Activated naive CD4-positive, alpha-beta T cell treated with anti-CD3 and anti-CD28 coated beads for 36 hours (primary cell): ENCODE measurements at regions of chr15 and their contacts with region 1.

Region 1: DNA sequence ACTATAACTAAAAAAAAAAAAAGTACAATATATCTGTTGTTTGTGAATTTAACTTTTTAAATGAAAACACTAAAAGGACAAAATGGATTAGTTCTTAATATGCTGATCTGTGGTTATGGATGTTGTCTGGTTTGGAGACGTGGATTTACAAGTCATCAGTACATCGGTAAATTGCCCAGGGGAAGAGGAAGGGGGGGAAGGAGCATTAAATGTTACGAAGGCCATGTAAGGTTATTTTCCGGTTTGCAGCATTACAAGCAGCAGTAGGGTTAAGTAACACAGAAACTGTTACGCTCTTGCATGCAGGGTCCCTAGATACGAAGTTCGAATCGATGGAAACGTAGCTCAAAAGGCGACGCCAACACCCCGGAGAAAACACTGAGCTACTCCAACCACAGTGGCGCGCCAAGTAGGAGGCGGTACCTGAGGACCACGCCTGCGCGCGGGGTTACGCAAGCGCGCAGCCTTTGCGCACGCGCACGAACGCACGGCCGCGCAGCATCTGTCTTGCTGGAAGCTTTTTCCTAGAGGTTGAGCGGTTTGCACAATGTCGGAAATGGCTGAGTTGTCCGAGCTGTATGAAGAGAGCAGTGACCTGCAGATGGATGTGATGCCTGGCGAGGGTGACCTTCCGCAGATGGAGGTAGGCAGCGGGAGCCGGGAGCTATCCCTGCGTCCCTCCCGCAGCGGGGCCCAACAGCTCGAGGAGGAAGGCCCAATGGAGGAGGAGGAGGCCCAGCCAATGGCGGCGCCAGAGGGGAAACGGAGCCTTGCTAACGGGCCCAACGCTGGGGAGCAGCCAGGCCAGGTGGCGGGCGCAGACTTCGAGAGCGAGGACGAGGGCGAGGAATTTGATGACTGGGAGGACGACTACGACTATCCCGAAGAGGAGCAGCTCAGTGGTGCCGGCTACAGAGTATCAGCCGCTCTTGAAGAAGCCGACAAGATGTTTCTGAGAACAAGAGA is at the start of gene EID1:
- DNase-seq: peak; percentile 93
- H3K4me3 Mint-ChIP-seq: peak within 1 kb of the TSS; percentile 92
- H3K27ac Mint-ChIP-seq: peak within 1 kb of the TSS; percentile 94
- H3K4me1 Mint-ChIP-seq: peaks cover 29% of the 10 kb centered on the region
- H3K27me3 Mint-ChIP-seq: peaks cover 6% of the 10 kb centered on the region
- total RNA-seq, gene EID1: 43.2 to 48.4 TPM

Region 2: GRCh38 chr15:48810414-48811317 is 67.2 kb before region 1 on chr15 and contains the start of gene CEP152:
- CTCF ChIA-PET with region 1: no interaction called
- intact Hi-C with region 1: loop called (anchors 1 kb)
- DNase-seq: peak; percentile 99
- H3K4me3 Mint-ChIP-seq: peak within 1 kb of the TSS; percentile 97
- H3K27ac Mint-ChIP-seq: peak within 1 kb of the TSS; percentile 95
- H3K4me1 Mint-ChIP-seq: peaks cover 35% of the 10 kb centered on the region
- H3K27me3 Mint-ChIP-seq: no peaks in the 10 kb centered on the region
- total RNA-seq, gene CEP152: 55.1 to 62.0 TPM

Region 3: DNA sequence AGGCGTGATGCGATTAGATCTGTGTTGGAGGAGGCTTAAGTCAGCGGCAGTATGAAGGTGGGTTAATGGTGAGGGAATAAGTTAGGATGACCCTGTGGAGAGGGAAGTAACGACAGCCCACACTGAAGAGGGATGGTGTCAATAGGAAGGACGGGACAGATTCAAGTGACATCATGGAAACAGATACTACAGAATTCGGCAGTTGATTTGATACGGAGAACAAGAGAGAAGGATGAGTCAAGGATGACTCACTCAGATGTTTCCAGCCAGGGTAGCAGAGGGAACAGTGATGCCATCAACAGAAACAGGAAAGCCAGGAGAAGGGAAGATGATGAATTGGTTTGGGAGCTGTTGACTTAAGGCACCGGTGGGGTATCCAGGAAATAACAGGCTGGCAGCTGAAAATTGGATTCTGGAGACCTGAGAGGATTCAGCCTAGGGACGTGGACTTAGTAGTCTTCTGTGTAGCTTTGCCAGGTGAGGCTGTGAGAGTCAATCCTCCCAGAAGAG is 47.9 kb after region 1 on chr15:
- CTCF ChIA-PET with region 1: no interaction called
- intact Hi-C with region 1: loop called (anchors 2 kb)
- DNase-seq: peak; percentile 19
- H3K4me3 Mint-ChIP-seq: no peak overlapping the region
- H3K27ac Mint-ChIP-seq: peak overlapping the region; percentile 37
- H3K4me1 Mint-ChIP-seq: peaks cover 31% of the 10 kb centered on the region
- H3K27me3 Mint-ChIP-seq: peaks cover 13% of the 10 kb centered on the region

Region 4: GRCh38 chr15:49046220-49047102 is 168.5 kb after region 1 on chr15 and contains the start of gene SECISBP2L:
- CTCF ChIA-PET with region 1: interaction called, 3 read pairs
- intact Hi-C with region 1: loop called (anchors 1 kb)
- DNase-seq: peak; percentile 95
- H3K4me3 Mint-ChIP-seq: peak within 1 kb of the TSS; percentile 91
- H3K27ac Mint-ChIP-seq: peak within 1 kb of the TSS; percentile 81
- H3K4me1 Mint-ChIP-seq: peaks cover 19% of the 10 kb centered on the region
- H3K27me3 Mint-ChIP-seq: no peaks in the 10 kb centered on the region
- total RNA-seq, gene SECISBP2L: 17.4 to 18.6 TPM

Region 5: GRCh38 chr15:49155110-49155833 is 277.4 kb after region 1 on chr15 and contains the start of gene COPS2:
- CTCF ChIA-PET with region 1: no interaction called
- intact Hi-C with region 1: loop called (anchors 1 kb)
- DNase-seq: peak; percentile 97
- H3K4me3 Mint-ChIP-seq: peak within 1 kb of the TSS; percentile 98
- H3K27ac Mint-ChIP-seq: peak within 1 kb of the TSS; percentile 97
- H3K4me1 Mint-ChIP-seq: peaks cover 41% of the 10 kb centered on the region
- H3K27me3 Mint-ChIP-seq: no peaks in the 10 kb centered on the region
- total RNA-seq, gene COPS2: 79.7 to 86.4 TPM

Region 6: DNA sequence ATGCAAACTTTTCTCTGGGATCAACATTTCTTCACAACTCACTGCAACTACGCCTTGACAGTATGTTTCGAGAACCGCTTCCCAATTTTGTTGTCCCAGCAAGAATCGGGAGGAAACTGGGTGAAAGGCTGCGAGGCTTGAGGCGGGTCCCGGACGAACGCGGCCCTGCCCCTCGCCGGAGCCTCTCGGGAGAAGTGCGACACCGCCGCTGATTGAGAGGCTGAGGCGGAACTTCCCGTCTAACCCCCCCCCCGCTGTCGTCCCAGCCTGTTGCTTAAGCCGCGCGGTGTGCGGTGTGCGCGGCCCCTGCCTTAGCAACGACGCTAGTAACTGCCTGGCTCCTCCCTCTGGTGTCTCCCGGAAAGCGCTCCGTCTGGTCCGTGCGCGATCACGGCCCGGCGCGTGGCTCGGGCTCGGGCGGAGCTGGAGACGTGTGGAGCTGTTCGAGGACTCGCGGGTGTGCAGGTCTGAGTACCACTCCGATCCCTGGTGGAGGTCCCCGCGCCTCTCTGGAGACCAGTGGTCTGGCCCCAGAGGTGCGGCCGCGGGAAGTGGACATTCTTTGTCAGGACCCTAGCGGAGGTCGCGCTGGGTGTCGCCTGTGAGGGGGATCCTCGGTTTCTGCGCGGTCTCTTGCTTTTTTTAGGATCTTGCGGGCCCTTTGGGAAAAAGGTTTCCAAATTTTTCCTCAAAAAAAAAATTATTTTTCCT is 742.9 kb after region 1 on chr15 and contains the starts of genes DTWD1 and FAM227B:
- CTCF ChIA-PET with region 1: no interaction called
- intact Hi-C with region 1: loop called (anchors 1 kb)
- DNase-seq: peak; percentile 96
- H3K4me3 Mint-ChIP-seq: peak within 1 kb of the TSS; percentile 88
- H3K27ac Mint-ChIP-seq: peak within 1 kb of the TSS; percentile 91
- H3K4me1 Mint-ChIP-seq: peaks cover 33% of the 10 kb centered on the region
- H3K27me3 Mint-ChIP-seq: no peaks in the 10 kb centered on the region
- total RNA-seq, gene DTWD1: 18.5 to 19.4 TPM
- total RNA-seq, gene FAM227B: 2.0 to 2.8 TPM